GM13976 (cell line): ENCODE measurements at regions of chr2 and their contacts with region 1.

Region 1: DNA sequence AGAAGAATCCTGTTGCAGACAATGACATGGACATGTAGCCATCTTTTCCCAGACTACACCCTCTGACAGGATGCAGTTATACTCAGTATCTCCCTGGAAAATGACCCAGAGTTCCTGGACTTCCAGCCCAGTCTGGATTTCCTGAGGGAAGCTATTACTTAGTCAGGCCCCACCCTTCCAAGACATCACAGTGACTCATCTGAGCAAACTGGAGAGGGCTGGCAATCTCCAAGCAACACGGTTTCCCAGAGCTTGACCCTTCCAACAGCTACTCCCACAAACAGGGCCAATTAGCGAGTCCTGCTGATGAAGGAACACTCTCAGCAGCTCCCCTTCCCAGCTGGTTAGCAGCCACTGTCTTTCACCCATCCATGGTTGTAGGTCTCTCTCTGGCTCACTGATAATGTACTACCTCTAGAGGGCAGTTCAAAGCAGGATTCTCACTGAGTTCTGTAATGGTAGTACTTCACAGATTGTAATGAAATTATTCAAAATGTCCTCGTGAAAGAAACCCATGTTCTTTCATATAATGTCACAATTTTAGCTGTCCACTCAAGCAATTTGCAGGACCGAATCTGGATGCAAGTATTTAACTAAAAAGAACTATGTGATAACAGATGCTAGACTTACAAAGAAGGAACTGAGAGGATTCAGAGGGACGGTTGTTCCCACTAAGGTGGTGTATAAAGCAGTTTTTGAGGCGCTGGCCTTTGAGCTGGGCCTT is 110.2 kb downstream of the MDH1 start:
- DNase-seq: peak; percentile 51
- CTCF ChIP-seq: peak; percentile 49

Region 2: GRCh38 chr2:63849381-63850203 is 150.6 kb after region 1 on chr2:
- in situ Hi-C with region 1: loop called (anchors 10 kb)
- DNase-seq: no peak
- CTCF ChIP-seq: no peak

Region 3: DNA sequence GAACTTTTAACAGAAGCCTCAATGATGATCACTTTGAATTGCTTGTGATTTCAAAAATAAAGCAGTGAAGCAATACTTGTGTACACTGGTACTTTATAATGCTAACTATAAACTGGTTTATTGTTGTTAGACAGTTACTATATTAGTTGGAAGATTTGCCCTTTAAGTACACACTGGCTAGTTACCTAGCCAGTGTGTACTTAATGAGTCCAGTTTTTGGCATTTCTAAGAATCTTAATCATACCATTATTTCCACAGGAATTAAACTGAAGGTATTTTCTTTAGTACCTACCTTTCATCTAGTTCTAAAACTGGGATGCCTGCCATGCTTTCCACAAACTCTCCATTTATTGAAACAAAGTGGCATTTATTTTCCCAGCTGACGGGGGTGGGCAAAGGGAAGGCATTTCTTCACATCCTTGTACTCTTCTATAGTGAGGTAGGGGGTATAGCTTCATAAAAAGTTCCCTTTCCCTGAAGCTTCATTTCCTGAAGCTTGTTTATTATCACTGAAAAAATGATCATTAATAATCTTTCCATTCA is 192.6 kb after region 1 on chr2:
- in situ Hi-C with region 1: loop called (anchors 10 kb)
- DNase-seq: no peak
- CTCF ChIP-seq: no peak

Region 4: DNA sequence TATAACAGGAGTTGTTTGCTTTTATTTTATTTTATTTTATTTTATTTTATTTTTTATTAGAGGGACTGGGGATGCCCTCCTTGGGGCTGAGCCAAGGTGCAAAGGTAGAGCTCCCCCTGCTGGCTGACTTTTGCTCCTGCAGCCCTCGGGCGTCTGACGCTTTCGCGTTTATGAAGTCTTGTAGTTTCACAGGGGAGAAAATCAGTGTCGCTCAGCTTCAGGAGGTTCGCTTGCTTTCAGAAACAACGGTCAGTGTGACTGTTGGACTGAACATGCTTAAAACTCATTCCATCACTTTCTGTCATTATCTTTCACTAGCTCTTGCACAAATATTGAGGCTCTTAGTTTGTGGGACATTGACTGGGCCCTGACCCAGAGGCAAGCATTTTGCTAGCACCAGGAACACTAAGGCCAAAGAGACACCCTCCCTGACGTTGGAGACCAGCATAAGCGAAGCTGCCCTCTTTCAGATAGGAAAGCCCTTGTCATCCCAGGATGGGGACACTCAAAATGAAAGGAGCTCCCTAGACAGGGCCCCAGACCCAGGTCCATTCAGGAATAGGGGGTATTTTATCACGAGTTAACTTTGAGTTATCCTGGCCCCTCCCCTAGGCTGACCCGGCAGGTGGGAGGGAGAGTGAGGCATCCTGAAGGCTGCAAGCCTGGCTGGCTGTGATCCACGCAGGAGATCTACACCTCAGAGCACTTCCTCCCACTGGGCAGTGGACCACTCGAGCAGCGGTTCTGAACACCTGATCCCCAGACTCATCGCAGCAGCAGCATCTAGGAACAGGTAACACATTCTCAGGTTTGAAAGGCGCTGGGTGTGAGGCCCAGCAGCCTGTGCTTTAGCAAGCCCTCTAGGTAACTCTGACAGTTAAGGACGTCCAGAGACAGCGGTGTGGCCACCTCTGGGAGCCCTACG is 789.3 kb after region 1 on chr2:
- in situ Hi-C with region 1: loop called (anchors 25 kb)
- DNase-seq: peak; percentile 69
- CTCF ChIP-seq: peak; percentile 91